Posterior cingulate gyrus (tissue), 11 donors: ENCODE measurements at regions of chr1 and their contacts with region 1.

Region 1: GRCh38 chr1:170685166-170685565 is 21.2 kb downstream of the PRRX1 start:
- DNase-seq: no peak

Region 2: GRCh38 chr1:170634293-170634692 is 50.9 kb before region 1 on chr1:
- intact Hi-C with region 1: no loop called
- DNase-seq: no peak

Region 3: DNA sequence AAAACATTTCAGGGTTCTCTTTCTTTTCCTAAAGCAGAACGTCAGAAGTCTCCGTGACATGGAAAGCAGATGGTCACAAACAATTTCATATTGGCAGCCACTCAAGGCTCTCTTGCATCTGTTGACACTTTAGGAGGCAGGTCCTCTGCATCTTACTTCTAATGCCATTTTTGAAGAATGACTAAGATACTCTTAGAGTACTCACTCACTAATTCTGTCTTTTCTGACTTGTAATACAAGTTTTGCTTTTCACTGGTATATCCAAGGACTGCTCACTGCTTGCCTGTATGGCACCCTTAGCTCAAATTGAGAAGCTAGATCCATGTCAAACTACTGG is 47.1 kb after region 1 on chr1:
- intact Hi-C with region 1: no loop called
- DNase-seq: no peak

Region 4: GRCh38 chr1:170881268-170882265 is 196.4 kb after region 1 on chr1:
- intact Hi-C with region 1: loop called (anchors 10 kb)
- DNase-seq: peak in 1 of 10 donors; percentile 13